ENCODE measurements at regions of chr1 and their contacts with region 1.

Region 1: GRCh38 chr1:222814536-222815439 is at the start of gene DISP1:
- DNase-seq: peak; percentile 67 to 77
- ATAC-seq: peak; percentile 88 to 92
- H3K4me3 ChIP-seq: peak within 1 kb of the TSS; percentile 75 to 82 (median 79)
- H3K27ac ChIP-seq: peak within 1 kb of the TSS; percentile 80 to 87 (median 86)
- H3K4me1 ChIP-seq: peaks cover 13 to 17% of the 10 kb centered on the region in 2 donors
- H3K27me3 ChIP-seq: no peaks in the 10 kb centered on the region
- CTCF ChIP-seq: no peak
- POLR2A ChIP-seq: peak; percentile 17 to 30
- total RNA-seq, gene DISP1: 2.4 to 3.7 (median 2.9) TPM

Region 2: DNA sequence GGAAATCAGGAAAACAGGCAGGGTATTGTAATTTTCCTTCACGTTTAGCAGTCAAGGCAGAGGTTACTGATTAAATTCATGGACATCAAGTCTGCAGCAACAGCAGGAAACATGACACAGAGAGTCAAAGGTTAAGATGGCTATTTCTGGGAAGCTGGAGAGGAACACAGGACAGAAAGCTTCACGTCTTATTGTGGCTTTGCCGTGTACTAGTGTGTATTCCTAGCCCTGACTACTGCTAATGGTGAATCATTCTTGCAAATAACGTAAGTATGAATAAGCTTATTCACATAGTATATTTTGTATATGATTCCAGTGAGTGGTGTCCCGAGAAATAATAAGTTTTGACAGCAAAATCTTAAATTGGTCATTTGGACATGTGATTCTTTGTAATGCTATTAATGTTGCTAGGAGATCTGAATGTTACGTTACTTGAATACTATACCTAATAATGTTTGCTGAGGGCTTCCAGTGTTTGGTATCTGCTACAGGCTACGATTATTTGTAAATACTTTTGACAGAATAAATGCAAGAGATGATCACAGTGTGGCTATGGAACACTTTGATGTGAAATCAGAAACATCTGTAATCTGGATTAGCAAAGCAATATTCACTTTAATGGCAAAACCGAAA is 77.5 kb after region 1 on chr1:
- in situ Hi-C with region 1: no loop called
- intact Hi-C with region 1: loop called (anchors 5 kb)
- DNase-seq: no peak
- ATAC-seq: peak; percentile 82 to 84
- H3K4me3 ChIP-seq: peak overlapping the region in 3 of 4 donors; percentile 1 to 18 (median 18)
- H3K27ac ChIP-seq: peak overlapping the region; percentile 56 to 72 (median 66)
- H3K4me1 ChIP-seq: peaks cover 16 to 25% of the 10 kb centered on the region in 2 donors
- H3K27me3 ChIP-seq: no peaks in the 10 kb centered on the region
- CTCF ChIP-seq: no peak
- POLR2A ChIP-seq: no peak

Region 3: GRCh38 chr1:222928212-222928611 is 113.4 kb after region 1 on chr1:
- in situ Hi-C with region 1: no loop called
- intact Hi-C with region 1: loop called (anchors 2 kb)
- DNase-seq: peak; percentile 64 to 80
- ATAC-seq: peak; percentile 94 to 95
- H3K4me3 ChIP-seq: peak overlapping the region; percentile 35 to 42 (median 38)
- H3K27ac ChIP-seq: peak overlapping the region; percentile 4 to 72 (median 65)
- H3K4me1 ChIP-seq: peaks cover 13 to 36% of the 10 kb centered on the region in 2 donors
- H3K27me3 ChIP-seq: no peaks in the 10 kb centered on the region
- CTCF ChIP-seq: peak in 1 of 5 experiments; percentile 23
- POLR2A ChIP-seq: peak in 1 of 2 donors; percentile 32

Region 4: GRCh38 chr1:223031733-223032601 is 217.2 kb after region 1 on chr1:
- in situ Hi-C with region 1: no loop called
- intact Hi-C with region 1: no loop called
- DNase-seq: peak in 1 of 2 donors; percentile 71
- ATAC-seq: peak; percentile 50 to 95
- H3K4me3 ChIP-seq: no peak overlapping the region
- H3K27ac ChIP-seq: peak overlapping the region; percentile 9 to 58 (median 36)
- H3K4me1 ChIP-seq: no peaks in the 10 kb centered on the region
- H3K27me3 ChIP-seq: no peaks in the 10 kb centered on the region
- CTCF ChIP-seq: no peak
- POLR2A ChIP-seq: no peak